Tibial artery (tissue), 4 donors: ENCODE measurements at regions of chr3 and their contacts with region 1.

Region 1: GRCh38 chr3:19173945-19174344 is 25.6 kb downstream of the KCNH8 start:
- DNase-seq: no peak
- H3K4me3 ChIP-seq: no peak overlapping the region
- H3K27ac ChIP-seq: no peak overlapping the region
- H3K4me1 ChIP-seq: no peaks in the 10 kb centered on the region
- H3K27me3 ChIP-seq: no peaks in the 10 kb centered on the region
- CTCF ChIP-seq: no peak

Region 2: GRCh38 chr3:18812316-18812715 is 361.6 kb before region 1 on chr3:
- intact Hi-C with region 1: no loop called
- DNase-seq: no peak
- H3K4me3 ChIP-seq: no peak overlapping the region
- H3K27ac ChIP-seq: no peak overlapping the region
- H3K4me1 ChIP-seq: no peaks in the 10 kb centered on the region
- H3K27me3 ChIP-seq: no peaks in the 10 kb centered on the region
- CTCF ChIP-seq: no peak

Region 3: DNA sequence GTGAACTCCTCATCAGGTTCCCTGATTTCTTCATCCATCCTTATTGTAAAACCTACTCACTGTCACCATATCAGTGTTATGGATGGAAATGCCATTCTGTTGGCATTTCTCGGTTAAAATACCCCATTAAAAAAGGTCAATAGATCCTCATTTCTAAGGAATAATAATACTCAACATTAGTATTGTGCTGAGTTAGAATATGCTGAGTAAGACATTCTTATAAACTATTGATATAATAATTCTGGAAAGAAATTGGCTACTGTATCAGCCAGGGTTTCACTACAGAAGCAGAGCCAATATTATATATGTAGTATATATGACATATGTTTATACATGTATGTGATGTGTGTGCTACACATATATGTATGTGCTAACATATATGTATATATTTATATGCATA is 121.1 kb before region 1 on chr3:
- intact Hi-C with region 1: loop called (anchors 5 kb)
- DNase-seq: no peak
- H3K4me3 ChIP-seq: no peak overlapping the region
- H3K27ac ChIP-seq: no peak overlapping the region
- H3K4me1 ChIP-seq: no peaks in the 10 kb centered on the region
- H3K27me3 ChIP-seq: no peaks in the 10 kb centered on the region
- CTCF ChIP-seq: no peak